ENCODE measurements at regions of chr1 and their contacts with region 1.

Region 1: GRCh38 chr1:205925730-205926129 is 17.5 kb downstream of the SLC26A9 start:
- DNase-seq: no peak

Region 2: DNA sequence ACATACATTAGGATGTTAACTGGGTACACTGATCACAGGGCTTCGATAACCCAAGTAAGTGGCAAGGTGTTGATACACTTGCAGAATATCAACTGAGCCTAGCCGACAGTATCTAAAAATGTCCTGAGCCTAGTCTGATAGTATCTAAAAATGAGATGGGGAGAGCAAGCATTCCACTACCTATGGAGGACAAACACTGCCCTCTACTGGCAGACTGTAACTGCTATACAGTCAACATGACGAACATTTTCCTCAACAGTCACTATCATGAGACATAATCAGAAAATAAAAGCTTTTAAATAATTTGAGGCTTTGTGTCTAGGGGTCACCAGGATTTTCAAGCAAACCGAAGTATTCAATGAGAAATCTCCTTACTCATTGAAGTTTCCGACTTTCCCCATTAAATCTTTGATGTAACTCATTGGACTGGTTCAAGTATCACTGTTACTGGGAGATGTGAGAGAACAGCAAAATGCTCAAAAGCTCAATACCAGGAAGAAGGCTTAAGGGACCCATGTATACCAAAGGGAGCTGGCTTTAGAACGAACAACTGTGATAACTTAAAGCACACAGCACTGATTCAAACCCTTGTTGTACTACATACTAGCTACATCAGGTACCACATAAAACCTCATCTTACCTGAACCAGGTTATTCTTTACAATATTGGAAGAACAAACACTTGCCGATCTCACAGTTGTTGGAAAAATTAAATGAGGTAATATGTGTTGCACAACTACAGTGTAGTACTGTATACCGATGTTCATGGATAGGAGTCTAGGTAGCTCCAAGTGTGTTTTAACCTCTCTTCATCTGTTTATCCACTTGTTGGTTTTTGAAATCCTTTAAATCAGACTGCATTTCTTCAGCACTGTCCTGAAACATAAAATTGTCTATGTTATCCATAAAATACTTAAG is 214.4 kb before region 1 on chr1:
- in situ Hi-C with region 1: no loop called
- DNase-seq: peak; percentile 50

Region 3: GRCh38 chr1:205977402-205978014 is 51.8 kb after region 1 on chr1:
- in situ Hi-C with region 1: loop called (anchors 5 kb)
- DNase-seq: peak; percentile 58

Measured in Caki2 (cell line).